Activated naive CD4-positive, alpha-beta T cell treated with anti-CD3 and anti-CD28 coated beads for 36 hours (primary cell): ENCODE measurements at regions of chr6 and their contacts with region 1.

Region 1: GRCh38 chr6:114108119-114109002 is 137.4 kb upstream of the HDAC2 start:
- DNase-seq: peak; percentile 62
- H3K4me3 Mint-ChIP-seq: no peak overlapping the region
- H3K27ac Mint-ChIP-seq: no peak overlapping the region
- H3K4me1 Mint-ChIP-seq: no peaks in the 10 kb centered on the region
- H3K27me3 Mint-ChIP-seq: peaks cover 20% of the 10 kb centered on the region

Region 2: DNA sequence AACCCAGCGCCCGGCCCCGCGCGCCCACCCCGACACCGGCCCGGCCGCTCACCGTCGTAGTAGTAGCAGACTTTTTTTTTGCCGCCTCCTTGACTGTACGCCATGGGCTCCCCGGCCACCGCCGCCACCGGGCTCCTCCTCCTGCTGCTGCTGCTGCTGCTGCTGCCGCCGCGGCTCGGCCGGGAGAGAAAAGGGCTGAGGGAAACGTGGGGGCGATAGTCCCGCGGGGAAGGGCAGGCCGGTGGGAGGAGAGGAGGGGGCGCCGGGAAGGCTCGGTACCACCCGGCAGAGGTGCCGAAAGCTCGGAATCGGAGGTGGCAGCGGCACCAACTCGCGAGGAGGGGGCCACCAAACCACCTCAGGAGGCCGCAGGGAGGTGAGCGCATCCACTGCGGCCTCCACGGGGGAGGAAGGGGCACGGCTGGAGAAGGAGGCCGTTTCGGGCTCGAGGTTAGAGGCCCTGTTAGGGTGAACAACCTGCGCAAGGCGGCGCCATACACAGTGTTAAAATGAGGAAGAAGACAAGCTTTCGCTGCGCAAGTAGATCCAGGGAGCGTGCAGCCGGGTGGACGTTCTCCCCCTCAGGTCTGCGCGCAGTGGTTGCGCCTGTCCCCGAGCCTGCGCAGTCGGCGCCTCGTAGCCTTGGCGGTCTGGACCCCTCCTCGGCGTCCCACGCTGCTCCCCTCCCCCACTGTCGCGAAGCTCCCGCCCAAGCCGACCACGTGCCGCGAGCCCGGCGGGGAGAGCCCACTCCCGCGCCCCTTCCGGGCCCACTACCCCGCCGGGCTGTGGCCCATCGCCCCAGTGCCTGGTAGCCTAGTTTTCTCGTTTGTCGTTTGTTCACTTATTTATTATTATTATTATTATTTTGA is 137.3 kb before region 1 on chr6 and contains the start of gene HDAC2:
- CTCF ChIA-PET with region 1: interaction called, 3 read pairs
- intact Hi-C with region 1: loop called (anchors 2 kb)
- DNase-seq: peak; percentile 84
- H3K4me3 Mint-ChIP-seq: peak within 1 kb of the TSS; percentile 95
- H3K27ac Mint-ChIP-seq: peak within 1 kb of the TSS; percentile 95
- H3K4me1 Mint-ChIP-seq: peaks cover 31% of the 10 kb centered on the region
- H3K27me3 Mint-ChIP-seq: no peaks in the 10 kb centered on the region
- total RNA-seq, gene HDAC2: 75.8 to 82.3 TPM

Region 3: DNA sequence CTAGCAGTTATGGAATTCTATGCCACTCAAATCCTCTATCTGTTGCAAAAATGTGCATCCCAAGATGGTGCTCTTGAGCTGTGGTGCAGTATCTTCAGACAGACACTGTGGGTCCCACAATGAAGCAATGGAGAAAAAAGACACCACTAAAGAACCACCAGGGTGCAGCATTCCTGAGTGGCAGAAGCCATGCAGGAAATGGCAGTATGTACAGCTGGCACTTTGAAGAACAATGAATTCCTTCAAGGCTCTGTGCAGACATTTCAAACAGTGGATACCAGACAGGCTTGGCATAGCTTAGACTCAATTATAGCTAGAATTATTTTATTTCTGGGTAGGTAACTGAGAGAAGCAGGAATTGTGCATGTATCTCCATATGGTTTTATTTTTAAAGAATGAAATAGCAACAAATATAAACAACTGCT is 113.4 kb before region 1 on chr6:
- CTCF ChIA-PET with region 1: interaction called, 5 read pairs
- intact Hi-C with region 1: loop called (anchors 1 kb)
- DNase-seq: peak; percentile 40
- H3K4me3 Mint-ChIP-seq: no peak overlapping the region
- H3K27ac Mint-ChIP-seq: no peak overlapping the region
- H3K4me1 Mint-ChIP-seq: no peaks in the 10 kb centered on the region
- H3K27me3 Mint-ChIP-seq: peaks cover 11% of the 10 kb centered on the region

Region 4: GRCh38 chr6:114096561-114097172 is 11.7 kb before region 1 on chr6:
- CTCF ChIA-PET with region 1: interaction called, 10 read pairs
- intact Hi-C with region 1: no loop called
- DNase-seq: peak; percentile 12
- H3K4me3 Mint-ChIP-seq: no peak overlapping the region
- H3K27ac Mint-ChIP-seq: no peak overlapping the region
- H3K4me1 Mint-ChIP-seq: no peaks in the 10 kb centered on the region
- H3K27me3 Mint-ChIP-seq: peaks cover 7% of the 10 kb centered on the region